Activated naive CD8-positive, alpha-beta T cell treated with anti-CD3 and anti-CD28 coated beads, Interleukin-2, amount 10 ng/mL, durations not matched to agents 7 days and 5 days (primary cell): ENCODE measurements at regions of chrX and their contacts with region 1.

Region 1: DNA sequence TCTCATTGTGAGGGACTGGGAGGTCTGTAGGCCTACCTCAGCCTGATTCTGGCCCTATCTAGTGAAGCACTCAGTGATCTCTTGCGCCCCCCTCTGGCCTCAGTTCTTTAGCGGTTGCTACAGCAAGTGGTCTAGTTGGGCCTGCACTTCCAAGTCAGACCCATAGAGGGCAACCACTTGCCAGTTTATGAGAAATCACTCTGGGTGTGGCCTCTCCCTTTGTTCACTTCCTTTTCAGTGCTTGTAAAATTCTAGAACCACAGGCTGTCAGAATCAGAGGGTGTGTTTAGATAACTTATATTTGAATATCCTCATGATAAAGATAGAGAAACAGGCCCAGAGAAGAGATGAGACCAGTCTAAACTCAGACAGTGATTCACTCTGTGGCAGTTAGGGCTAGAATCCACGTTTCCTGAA is 60.9 kb upstream of the LAS1L start:
- DNase-seq: peak; percentile 83
- ATAC-seq: peak; percentile 73
- H3K4me3 Mint-ChIP-seq: peak overlapping the region; percentile 73
- H3K27ac Mint-ChIP-seq: peak overlapping the region; percentile 93
- H3K4me1 Mint-ChIP-seq: peaks cover 44% of the 10 kb centered on the region
- H3K27me3 Mint-ChIP-seq: no peaks in the 10 kb centered on the region

Region 2: DNA sequence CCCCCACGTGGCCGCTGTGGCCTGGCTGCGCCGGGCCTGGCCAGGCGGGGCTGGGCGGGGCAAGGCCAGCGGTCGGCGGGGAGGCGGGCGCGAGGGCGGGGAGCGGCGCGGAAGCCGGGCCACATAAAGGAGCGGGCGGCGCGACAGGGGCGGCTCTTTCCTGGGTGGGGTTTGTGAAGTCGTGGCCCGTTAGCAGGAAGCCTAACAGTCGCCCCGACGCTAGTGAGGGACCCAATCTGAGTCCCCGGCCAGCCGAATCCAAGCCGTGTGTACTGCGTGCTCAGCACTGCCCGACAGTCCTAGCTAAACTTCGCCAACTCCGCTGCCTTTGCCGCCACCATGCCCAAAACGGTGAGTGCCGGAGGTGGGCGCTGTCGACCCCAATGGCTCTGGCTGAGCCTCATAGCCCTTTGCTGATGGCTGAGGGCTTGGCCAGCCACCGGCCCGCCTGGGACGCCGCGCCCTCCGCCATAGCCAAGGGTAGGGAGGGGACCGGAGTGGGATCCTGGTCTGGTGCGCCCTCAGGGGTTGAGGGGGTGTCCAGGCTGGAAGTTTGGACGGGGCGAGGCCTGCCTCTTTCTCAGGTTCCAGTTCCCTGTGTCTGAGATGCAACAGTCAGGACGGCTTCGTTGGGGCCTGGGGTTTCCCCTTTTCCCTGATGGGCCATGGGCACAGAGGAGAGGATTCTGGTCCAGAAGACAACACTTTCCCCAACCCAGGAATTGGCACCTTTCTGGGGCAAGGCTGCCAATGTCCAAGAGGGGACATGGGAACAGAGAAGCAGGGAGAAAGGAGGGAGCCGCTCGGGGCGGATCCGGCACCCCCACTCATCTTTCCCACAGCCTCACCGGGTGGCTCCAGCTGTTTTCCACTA is 72.3 kb after region 1 on chrX and contains the start of gene MSN:
- POLR2A ChIA-PET with region 1: interaction called, 28 read pairs
- DNase-seq: peak; percentile 83
- ATAC-seq: peak; percentile 82
- H3K4me3 Mint-ChIP-seq: peak within 1 kb of the TSS; percentile 94
- H3K27ac Mint-ChIP-seq: peak within 1 kb of the TSS; percentile 93
- H3K4me1 Mint-ChIP-seq: peaks cover 28% of the 10 kb centered on the region
- H3K27me3 Mint-ChIP-seq: no peaks in the 10 kb centered on the region
- total RNA-seq, gene MSN: 483 to 487 TPM

Region 3: DNA sequence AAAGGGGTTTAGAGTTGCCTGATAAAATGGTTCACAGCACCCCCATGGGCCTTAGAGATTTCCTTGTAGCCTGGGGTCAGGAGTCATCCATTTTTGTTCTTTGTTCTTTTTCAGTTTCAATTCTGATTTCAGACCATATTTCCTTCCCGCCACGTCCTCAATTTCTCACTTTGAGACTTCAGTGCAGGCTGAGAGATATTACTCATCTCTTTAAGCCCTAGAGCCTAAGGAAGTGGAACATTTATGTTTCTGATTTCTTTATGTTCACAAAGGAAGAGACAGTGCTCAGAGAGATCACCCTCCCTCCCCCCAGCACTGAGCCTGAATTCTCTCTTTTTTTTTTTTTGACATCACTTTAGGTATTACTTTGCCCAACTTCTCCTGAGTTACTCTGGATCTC is 128.2 kb after region 1 on chrX:
- POLR2A ChIA-PET with region 1: interaction called, 13 read pairs
- DNase-seq: no peak
- ATAC-seq: peak; percentile 84
- H3K4me3 Mint-ChIP-seq: peak overlapping the region; percentile 66
- H3K27ac Mint-ChIP-seq: peak overlapping the region; percentile 89
- H3K4me1 Mint-ChIP-seq: peaks cover 71% of the 10 kb centered on the region
- H3K27me3 Mint-ChIP-seq: no peaks in the 10 kb centered on the region